Esophagus muscularis mucosa (tissue), 4 donors: ENCODE measurements at regions of chr1 and their contacts with region 1.

Region 1: DNA sequence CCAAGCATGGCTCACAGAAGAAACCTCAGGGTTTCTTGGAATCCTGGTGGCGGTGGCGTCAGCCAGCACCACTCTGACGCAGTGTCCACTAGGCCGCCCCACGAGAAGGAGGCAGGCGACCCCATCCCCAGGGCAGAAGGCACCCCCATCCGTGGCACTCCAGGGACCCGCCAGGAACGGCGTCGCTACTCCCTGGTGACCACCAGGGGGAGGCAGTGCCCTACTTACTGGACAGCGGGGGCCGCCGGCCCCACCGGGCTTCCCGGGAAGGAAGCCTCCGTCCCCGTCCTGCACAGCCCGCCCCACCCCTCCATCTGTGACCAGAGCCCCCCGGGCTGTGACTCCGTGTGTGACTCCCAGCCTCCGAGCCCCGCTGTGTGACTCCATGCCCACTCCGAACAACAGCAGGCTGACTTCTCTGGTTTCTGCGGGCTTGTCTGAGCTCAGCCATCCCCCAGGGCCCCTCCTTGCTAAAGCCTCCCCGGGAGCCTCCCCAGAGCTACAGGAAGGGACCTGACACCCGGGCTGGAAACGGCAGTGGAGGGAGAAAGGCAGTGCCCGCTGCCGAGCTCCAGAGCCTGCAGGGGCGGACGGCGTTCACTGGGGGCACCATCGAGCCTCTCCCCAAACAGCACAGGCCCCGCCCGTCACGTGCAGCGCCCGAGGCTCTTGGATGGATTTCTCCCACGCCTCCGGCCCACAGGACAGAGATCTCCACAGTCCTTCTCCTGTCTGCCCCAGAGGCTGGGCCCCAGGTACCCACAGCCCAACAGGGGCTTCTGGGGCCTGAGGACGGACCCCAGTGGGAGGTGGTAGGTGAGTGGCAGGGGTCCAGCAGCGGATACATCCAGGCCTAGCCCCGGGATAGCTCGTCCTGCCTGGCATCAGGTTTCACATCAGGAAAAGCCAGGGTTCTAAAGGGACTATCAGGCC is 21.1 kb downstream of the KIF17 start:
- DNase-seq: peak; percentile 94
- H3K4me3 ChIP-seq: peak overlapping the region; percentile 60 to 76 (median 66)
- H3K27ac ChIP-seq: peak overlapping the region; percentile 80 to 91 (median 86)
- H3K4me1 ChIP-seq: peaks cover 7 to 33% (median 29%) of the 10 kb centered on the region in 4 donors
- H3K27me3 ChIP-seq: no peaks in the 10 kb centered on the region
- CTCF ChIP-seq: peak; percentile 68 to 89 (median 88)
- EP300 ChIP-seq: no peak
- POLR2A ChIP-seq: no peak

Region 2: DNA sequence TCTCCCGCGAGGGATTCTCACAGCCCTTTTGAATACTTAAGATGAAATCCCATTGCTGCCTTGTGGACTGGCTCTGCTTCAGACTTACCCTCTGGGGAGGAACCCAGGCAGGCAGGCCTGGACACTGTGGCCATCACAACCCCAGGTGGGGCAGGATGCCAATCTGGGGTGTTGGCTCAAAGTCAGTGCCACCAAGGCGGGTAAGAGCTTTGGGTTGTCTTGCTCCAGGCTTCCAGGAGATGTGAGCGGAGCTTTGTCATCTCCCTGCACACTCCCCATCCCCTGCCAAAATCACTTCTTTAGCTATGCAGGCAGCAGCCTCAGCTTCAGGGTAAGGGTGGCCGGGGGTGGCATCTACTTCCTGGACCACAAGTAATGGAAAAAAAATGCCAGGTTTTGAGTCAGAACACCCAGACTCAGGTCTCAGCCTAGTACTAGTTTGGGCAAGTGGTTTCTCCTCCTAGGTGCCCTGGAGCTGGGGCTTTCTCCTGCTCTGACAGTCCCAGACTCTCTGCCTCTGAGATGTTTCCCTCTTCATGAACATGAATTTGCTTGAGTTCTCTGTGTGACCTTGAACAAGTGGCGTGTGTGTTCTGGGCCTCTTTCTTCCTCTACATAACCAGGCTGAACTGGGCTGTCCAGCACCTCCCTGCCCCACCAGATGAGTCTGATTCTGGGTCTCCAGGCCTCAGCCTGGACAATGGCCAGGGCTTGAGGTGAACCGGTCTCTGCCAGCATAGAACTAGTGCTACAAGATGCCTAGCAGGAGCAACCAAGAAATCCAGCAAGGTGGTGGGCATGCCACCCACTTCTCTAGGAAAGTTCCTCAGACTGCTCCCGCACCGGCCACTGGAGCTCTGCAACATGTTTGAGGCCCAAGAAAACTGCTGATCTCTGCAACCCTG is 340.6 kb before region 1 on chr1:
- intact Hi-C with region 1: no loop called
- DNase-seq: no peak
- H3K4me3 ChIP-seq: no peak overlapping the region
- H3K27ac ChIP-seq: no peak overlapping the region
- H3K4me1 ChIP-seq: peaks cover 15 to 21% (median 18%) of the 10 kb centered on the region in 4 donors
- H3K27me3 ChIP-seq: peaks cover 0 to 53% (median 2%) of the 10 kb centered on the region in 4 donors
- CTCF ChIP-seq: no peak
- EP300 ChIP-seq: no peak
- POLR2A ChIP-seq: no peak

Region 3: GRCh38 chr1:20472860-20473711 is 223.6 kb before region 1 on chr1:
- intact Hi-C with region 1: no loop called
- DNase-seq: no peak
- H3K4me3 ChIP-seq: no peak overlapping the region
- H3K27ac ChIP-seq: no peak overlapping the region
- H3K4me1 ChIP-seq: peaks cover 8 to 27% (median 23%) of the 10 kb centered on the region in 4 donors
- H3K27me3 ChIP-seq: peaks cover 0 to 50% (median 3%) of the 10 kb centered on the region in 4 donors
- CTCF ChIP-seq: no peak
- EP300 ChIP-seq: no peak
- POLR2A ChIP-seq: no peak

Region 4: DNA sequence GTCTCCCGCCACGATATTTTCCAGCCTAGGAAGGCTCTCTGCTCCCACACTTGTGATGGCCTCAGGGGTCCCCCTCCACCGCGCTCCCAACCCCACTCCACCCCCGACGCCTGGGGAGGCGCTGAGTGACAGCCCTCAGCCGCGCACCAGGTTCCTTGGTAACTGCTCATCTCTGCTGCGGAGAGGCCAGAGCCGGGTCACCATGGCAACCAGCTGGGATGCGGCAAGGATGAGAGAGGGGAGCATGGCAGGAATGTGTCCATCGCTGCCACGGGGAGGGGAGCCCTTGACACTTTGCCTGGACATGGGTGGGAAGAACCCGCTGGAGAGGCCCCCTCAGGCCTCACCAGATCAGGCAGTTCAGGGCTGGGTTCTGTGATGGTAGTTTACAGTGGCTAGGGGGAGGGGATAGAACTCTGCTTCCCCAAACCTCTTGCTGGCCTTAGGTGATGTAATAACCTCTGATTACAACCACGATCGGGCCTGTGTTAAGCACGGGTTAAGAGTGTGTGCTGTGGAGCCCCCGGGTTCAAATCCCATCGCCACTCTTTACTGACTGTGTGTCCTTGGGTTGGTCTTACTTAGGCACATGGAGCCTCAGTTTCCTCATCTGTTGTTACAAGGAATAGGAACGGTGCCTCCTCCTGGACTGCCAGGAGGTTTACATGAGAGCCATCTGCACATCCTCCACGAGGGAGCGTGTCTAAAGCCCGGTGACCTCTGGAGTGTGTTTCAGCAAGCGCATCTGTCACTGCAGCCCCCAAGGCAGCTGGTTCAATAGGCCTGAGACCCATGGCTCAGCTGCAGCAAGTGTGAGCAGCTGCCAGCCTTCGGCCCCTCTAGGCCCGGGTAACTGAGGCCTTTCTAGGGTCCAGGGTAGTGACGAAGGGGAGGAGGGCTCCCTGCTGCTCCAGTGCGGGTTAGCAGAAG is 14.9 kb after region 1 on chr1:
- intact Hi-C with region 1: no loop called
- DNase-seq: no peak
- H3K4me3 ChIP-seq: no peak overlapping the region
- H3K27ac ChIP-seq: no peak overlapping the region
- H3K4me1 ChIP-seq: no peaks in the 10 kb centered on the region
- H3K27me3 ChIP-seq: peaks cover 0 to 48% (median 4%) of the 10 kb centered on the region in 4 donors
- CTCF ChIP-seq: no peak
- EP300 ChIP-seq: no peak
- POLR2A ChIP-seq: no peak

Region 5: DNA sequence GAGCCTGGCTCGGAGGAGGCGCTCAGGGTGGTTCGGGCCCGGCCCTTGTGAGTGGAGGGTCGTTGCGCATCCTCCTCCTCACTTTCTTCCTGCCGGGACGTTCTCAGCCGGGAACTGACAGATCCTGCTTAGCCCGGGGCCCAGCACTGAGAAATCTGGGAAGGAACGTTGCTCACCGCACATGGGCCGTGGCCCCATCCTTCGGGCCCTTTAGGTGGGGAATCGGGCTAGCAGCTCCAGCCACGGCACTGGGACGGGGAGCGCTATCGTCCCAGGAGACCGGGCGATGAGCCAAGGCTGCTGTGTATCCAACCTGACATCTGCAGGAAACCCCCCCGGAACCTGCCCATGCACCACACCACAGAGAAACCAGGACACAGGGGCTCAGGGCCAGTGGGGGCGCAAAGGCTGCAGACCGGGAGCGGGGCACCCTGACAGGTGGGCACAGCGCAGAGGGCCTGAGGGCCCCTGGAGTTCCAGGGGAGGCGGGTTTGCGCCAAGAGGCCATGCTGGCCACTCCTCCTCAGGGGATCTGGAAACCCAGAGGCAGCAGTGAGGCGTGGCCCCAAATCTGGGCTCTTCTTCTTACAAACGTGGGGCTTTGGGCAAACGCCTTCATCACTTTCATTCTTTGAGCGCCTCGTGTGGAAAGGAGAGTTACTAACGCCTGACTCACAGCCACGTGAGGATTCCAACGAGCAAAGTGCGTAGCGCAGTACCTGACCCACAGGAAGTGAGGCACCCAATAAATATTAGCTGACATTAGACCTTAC is 36.1 kb after region 1 on chr1 and contains the start of gene SH2D5:
- intact Hi-C with region 1: loop called (anchors 2 kb)
- DNase-seq: peak; percentile 97
- H3K4me3 ChIP-seq: peak within 1 kb of the TSS; percentile 63 to 86 (median 70)
- H3K27ac ChIP-seq: peak within 1 kb of the TSS; percentile 62 to 76 (median 68)
- H3K4me1 ChIP-seq: peaks cover 19 to 41% (median 30%) of the 10 kb centered on the region in 4 donors
- H3K27me3 ChIP-seq: peaks cover 0 to 40% (median 0%) of the 10 kb centered on the region in 4 donors
- CTCF ChIP-seq: peak in 2 of 3 experiments; percentile 39 to 42
- EP300 ChIP-seq: no peak
- POLR2A ChIP-seq: no peak
- total RNA-seq, gene SH2D5: 0.42 to 7.2 (median 1.7) TPM

Region 6: GRCh38 chr1:20786253-20787028 is 89.8 kb after region 1 on chr1:
- intact Hi-C with region 1: loop called (anchors 5 kb)
- DNase-seq: peak; percentile 97
- H3K4me3 ChIP-seq: peak overlapping the region; percentile 72 to 99 (median 92)
- H3K27ac ChIP-seq: peak overlapping the region; percentile 98 to 99 (median 99)
- H3K4me1 ChIP-seq: peaks cover 31 to 51% (median 49%) of the 10 kb centered on the region in 4 donors
- H3K27me3 ChIP-seq: no peaks in the 10 kb centered on the region
- CTCF ChIP-seq: no peak
- EP300 ChIP-seq: no peak
- POLR2A ChIP-seq: peak; percentile 11

Region 7: DNA sequence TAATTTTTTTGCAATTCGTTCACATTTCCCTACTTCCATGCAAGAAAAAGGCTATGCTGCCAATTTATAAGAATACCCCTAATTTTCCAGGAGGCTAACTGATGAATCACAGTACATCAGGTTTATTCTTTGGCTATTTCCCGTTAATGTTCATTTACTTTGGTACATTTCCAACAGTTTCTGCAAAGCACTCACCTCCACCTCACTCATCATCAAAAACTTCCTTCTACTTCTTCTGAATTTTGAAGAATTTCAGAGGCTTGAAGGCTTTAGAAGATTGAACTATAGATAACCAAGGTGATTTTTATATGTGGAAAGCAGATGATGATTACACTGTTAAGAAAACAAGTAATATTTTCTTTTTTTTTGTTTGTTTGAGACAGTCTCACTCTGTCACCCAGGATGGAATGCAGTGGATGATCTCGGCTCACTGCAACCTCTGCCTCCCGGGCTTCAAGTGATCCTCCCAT is 151.0 kb after region 1 on chr1:
- intact Hi-C with region 1: no loop called
- DNase-seq: no peak
- H3K4me3 ChIP-seq: no peak overlapping the region
- H3K27ac ChIP-seq: no peak overlapping the region
- H3K4me1 ChIP-seq: peaks cover 0 to 10% (median 3%) of the 10 kb centered on the region in 4 donors
- H3K27me3 ChIP-seq: no peaks in the 10 kb centered on the region
- CTCF ChIP-seq: no peak
- EP300 ChIP-seq: no peak
- POLR2A ChIP-seq: no peak

Region 8: GRCh38 chr1:20981915-20982314 is 285.3 kb after region 1 on chr1:
- intact Hi-C with region 1: loop called (anchors 10 kb)
- DNase-seq: no peak
- H3K4me3 ChIP-seq: no peak overlapping the region
- H3K27ac ChIP-seq: no peak overlapping the region
- H3K4me1 ChIP-seq: peaks cover 0 to 6% (median 4%) of the 10 kb centered on the region in 4 donors
- H3K27me3 ChIP-seq: no peaks in the 10 kb centered on the region
- CTCF ChIP-seq: peak; percentile 42 to 51 (median 44)
- EP300 ChIP-seq: no peak
- POLR2A ChIP-seq: no peak

Region 9: DNA sequence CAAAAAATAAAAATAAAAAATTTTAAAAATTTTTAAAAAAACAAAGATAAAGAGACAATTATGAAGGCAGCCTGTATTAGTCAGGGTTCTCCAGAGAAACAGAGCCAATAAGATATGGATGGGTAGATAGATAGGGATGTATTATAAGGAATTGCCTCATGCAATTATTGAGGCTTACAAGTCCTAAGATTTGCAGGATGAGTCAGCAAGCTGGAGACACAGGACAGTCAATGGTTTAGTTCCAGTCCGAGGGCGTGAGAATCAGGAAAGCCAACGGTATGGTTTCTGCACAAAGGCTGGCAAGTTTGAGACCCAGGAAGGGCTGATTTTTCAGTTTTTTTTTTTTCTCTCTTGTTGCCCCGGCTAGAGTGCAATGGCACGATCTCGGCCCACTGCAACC is 504.1 kb after region 1 on chr1:
- intact Hi-C with region 1: loop called (anchors 1 kb)
- DNase-seq: no peak
- H3K4me3 ChIP-seq: no peak overlapping the region
- H3K27ac ChIP-seq: no peak overlapping the region
- H3K4me1 ChIP-seq: no peaks in the 10 kb centered on the region
- H3K27me3 ChIP-seq: no peaks in the 10 kb centered on the region
- CTCF ChIP-seq: no peak
- EP300 ChIP-seq: no peak
- POLR2A ChIP-seq: no peak